ENCODE measurements at regions of chr1 and their contacts with region 1.

Region 1: GRCh38 chr1:37807555-37808368 is at the starts of genes C1orf122 and YRDC:
- DNase-seq: peak; percentile 94
- H3K4me3 Mint-ChIP-seq: peak within 1 kb of the TSS; percentile 98
- H3K27ac Mint-ChIP-seq: peak within 1 kb of the TSS; percentile 93
- H3K4me1 Mint-ChIP-seq: peaks cover 40% of the 10 kb centered on the region
- H3K27me3 Mint-ChIP-seq: no peaks in the 10 kb centered on the region
- total RNA-seq, gene C1orf122: 17.3 to 18.3 TPM
- total RNA-seq, gene YRDC: 16.4 to 16.8 TPM

Region 2: GRCh38 chr1:37793773-37794371 is 13.9 kb before region 1 on chr1 and contains the start of gene MANEAL:
- CTCF ChIA-PET with region 1: interaction called, 4 read pairs
- POLR2A ChIA-PET with region 1: interaction called, 10 read pairs
- DNase-seq: peak; percentile 28
- H3K4me3 Mint-ChIP-seq: peak within 1 kb of the TSS; percentile 63
- H3K27ac Mint-ChIP-seq: no peak within 1 kb of the TSS
- H3K4me1 Mint-ChIP-seq: peaks cover 13% of the 10 kb centered on the region
- H3K27me3 Mint-ChIP-seq: peaks cover 38% of the 10 kb centered on the region
- total RNA-seq, gene MANEAL: 1.7 to 1.8 TPM

Region 3: GRCh38 chr1:37822906-37823815 is 15.4 kb after region 1 on chr1:
- CTCF ChIA-PET with region 1: interaction called, 3 read pairs
- POLR2A ChIA-PET with region 1: interaction called, 10 read pairs
- DNase-seq: peak; percentile 32
- H3K4me3 Mint-ChIP-seq: no peak overlapping the region
- H3K27ac Mint-ChIP-seq: peak overlapping the region; percentile 50
- H3K4me1 Mint-ChIP-seq: peaks cover 15% of the 10 kb centered on the region
- H3K27me3 Mint-ChIP-seq: no peaks in the 10 kb centered on the region

Region 4: DNA sequence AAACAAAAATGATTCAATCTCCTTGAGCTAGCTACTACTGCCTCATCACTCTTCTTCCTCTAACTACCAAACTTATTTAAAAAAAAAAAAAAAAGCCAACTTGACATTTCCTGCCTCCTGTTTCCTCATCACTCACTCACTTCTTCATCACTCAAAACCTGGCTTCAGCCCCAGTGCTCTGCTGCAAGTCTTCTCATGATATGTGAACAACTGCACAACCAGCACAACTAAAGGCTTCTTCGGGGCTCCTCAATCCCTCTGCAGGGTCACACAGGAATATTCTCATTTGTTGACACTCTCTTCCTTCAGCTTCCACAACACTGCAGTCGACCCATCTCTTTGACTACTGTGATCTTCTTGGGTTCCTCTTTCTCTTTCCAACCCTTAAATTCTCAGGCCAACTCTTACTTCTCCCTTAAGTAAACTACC is 44.0 kb after region 1 on chr1:
- CTCF ChIA-PET with region 1: no interaction called
- POLR2A ChIA-PET with region 1: interaction called, 12 read pairs
- DNase-seq: no peak
- H3K4me3 Mint-ChIP-seq: no peak overlapping the region
- H3K27ac Mint-ChIP-seq: no peak overlapping the region
- H3K4me1 Mint-ChIP-seq: peaks cover 28% of the 10 kb centered on the region
- H3K27me3 Mint-ChIP-seq: no peaks in the 10 kb centered on the region

Region 5: DNA sequence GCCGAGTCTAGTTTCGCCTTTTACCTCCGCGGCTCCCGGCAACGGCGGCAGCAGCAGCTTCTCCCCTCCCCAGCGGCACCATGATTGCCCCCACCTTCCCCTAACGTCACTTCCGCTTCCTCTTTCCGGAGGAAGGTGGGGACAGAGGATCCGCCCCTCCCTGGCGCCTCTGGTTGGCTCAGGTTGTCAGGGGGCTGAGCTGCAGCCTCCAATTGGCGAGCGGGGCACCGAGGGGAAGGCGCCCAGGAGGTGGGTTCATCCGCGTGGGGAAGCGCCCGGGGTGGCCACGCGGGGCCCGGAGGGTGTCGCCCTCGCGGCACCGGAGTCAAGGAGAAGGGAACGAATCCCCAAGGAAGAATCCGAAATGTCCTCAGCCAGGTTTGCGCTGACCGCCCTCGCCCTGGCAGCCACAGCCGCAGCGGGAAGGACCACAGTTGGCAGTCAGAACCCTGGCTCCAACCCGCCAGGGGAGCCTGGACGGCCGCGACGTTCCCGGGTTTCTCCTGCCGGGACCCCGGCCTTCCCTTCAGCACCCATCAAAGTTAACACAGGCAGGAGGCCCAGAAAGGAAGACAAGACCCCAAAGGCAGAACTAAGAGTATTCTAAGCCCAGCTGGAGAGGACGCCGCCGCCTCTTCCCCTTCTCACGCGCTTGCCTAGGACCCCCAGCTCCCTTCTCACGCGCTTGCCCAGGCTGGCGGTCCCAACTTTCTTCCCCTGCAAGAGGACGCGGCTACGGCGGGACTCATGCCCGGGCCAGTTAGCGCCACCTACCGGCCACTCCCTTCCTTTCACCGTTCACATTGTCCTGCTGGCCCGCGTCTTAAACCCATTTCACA is 52.0 kb after region 1 on chr1 and contains the start of gene MTF1:
- CTCF ChIA-PET with region 1: interaction called, 28 read pairs
- POLR2A ChIA-PET with region 1: interaction called, 43 read pairs
- DNase-seq: peak; percentile 97
- H3K4me3 Mint-ChIP-seq: peak within 1 kb of the TSS; percentile 100
- H3K27ac Mint-ChIP-seq: peak within 1 kb of the TSS; percentile 99
- H3K4me1 Mint-ChIP-seq: peaks cover 45% of the 10 kb centered on the region
- H3K27me3 Mint-ChIP-seq: no peaks in the 10 kb centered on the region
- total RNA-seq, gene MTF1: 27.5 to 28.8 TPM

Region 6: DNA sequence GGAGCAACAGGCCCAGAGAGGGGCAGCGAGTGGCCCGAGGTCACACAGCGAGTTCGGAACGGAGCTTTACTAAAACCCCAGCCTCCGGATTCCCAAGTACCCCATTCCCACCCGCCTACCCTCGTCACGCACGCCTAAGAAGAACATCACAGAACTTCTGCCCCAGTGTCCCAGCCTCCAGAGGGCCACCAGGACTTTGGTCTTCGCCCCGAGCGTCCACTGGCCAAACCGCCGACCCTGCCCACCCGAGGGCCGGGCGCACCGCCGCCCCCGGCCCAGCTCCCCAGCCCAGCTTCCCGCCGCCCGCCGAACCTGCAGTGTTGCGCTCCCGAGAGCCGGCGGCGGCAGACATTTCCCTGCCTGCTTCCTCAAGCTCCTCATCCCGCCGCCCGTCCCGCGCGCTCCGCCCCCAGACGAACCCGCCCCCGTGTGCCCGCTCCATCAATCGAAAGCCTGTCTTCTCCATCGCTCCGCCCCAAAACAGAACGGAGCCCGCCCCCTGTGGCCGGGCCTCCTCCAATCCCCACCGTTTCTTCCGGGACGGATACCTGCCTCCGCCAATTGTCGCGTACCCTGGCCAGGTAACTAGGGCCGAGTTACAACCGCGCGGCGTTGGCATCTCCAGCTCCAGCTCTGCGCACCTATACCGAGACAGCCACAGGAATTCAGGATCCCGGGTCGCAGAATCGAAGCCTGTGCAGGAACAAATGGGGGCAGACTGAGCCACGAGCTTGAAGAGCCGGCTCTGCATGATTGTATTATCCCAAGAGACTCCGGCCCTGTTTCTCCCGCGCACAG is 123.8 kb after region 1 on chr1:
- CTCF ChIA-PET with region 1: no interaction called
- POLR2A ChIA-PET with region 1: interaction called, 12 read pairs
- DNase-seq: peak; percentile 98
- H3K4me3 Mint-ChIP-seq: peak overlapping the region; percentile 94
- H3K27ac Mint-ChIP-seq: peak overlapping the region; percentile 57
- H3K4me1 Mint-ChIP-seq: peaks cover 30% of the 10 kb centered on the region
- H3K27me3 Mint-ChIP-seq: no peaks in the 10 kb centered on the region